ENCODE measurements at regions of chr4 and their contacts with region 1.

Region 1: GRCh38 chr4:20816287-20816686 is 116.0 kb downstream of the PACRGL start:
- DNase-seq: no peak
- H3K4me3 ChIP-seq: no peak overlapping the region
- H3K27ac ChIP-seq: no peak overlapping the region
- H3K4me1 ChIP-seq: no peaks in the 10 kb centered on the region
- H3K27me3 ChIP-seq: no peaks in the 10 kb centered on the region
- CTCF ChIP-seq: no peak

Region 2: GRCh38 chr4:20805716-20806115 is 10.6 kb before region 1 on chr4:
- CTCF ChIA-PET with region 1: interaction called, 4 read pairs
- POLR2A ChIA-PET with region 1: interaction called, 17 read pairs
- intact Hi-C with region 1: no loop called
- DNase-seq: no peak
- H3K4me3 ChIP-seq: no peak overlapping the region
- H3K27ac ChIP-seq: no peak overlapping the region
- H3K4me1 ChIP-seq: no peaks in the 10 kb centered on the region
- H3K27me3 ChIP-seq: no peaks in the 10 kb centered on the region
- CTCF ChIP-seq: no peak

Measured in PC-9 (cell line).